Psoas muscle (tissue), 8 donors: ENCODE measurements at regions of chr10 and their contacts with region 1.

Region 1: GRCh38 chr10:110893559-110894179 is 21.9 kb downstream of the PDCD4 start:
- DNase-seq: no peak
- ATAC-seq: peak; percentile 42 to 91 (median 74)
- H3K4me3 ChIP-seq: no peak overlapping the region
- H3K27ac ChIP-seq: no peak overlapping the region
- H3K4me1 ChIP-seq: no peaks in the 10 kb centered on the region
- H3K27me3 ChIP-seq: no peaks in the 10 kb centered on the region
- CTCF ChIP-seq: peak; percentile 65

Region 2: DNA sequence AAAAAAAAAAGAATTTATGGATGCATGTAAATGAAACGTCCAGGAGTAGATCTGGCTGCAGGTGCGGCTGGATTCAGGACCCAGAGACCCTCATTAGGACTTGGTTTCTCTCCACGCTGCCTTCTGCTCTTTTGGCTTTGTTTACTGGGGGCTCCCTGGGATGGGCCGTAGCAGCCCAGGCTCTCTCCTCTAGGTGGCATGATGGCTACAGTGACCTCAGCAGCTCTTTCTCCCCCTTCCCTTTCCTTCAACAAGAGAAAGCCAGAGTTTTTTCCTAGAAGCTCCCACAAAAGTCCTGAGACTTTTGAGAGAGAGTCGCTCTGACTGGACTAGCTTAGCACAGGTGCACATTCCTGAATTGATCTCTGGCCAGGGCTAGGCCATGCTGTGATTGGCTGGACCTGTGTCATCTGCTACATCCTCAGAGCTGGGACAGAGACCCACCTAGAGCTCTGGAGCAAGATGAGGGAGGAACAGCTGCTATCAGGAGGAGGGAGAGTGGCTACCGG is 89.8 kb before region 1 on chr10:
- intact Hi-C with region 1: loop called (anchors 2 to 5 kb)
- DNase-seq: peak; percentile 27 to 65
- ATAC-seq: peak; percentile 45 to 73 (median 70)
- H3K4me3 ChIP-seq: no peak overlapping the region
- H3K27ac ChIP-seq: no peak overlapping the region
- H3K4me1 ChIP-seq: peaks cover 16% of the 10 kb centered on the region
- H3K27me3 ChIP-seq: no peaks in the 10 kb centered on the region
- CTCF ChIP-seq: peak; percentile 51

Region 3: GRCh38 chr10:111076191-111076681 is 182.6 kb after region 1 on chr10:
- intact Hi-C with region 1: no loop called
- DNase-seq: peak; percentile 49 to 74
- ATAC-seq: peak; percentile 75 to 92 (median 84)
- H3K4me3 ChIP-seq: peak overlapping the region; percentile 67
- H3K27ac ChIP-seq: no peak overlapping the region
- H3K4me1 ChIP-seq: peaks cover 16% of the 10 kb centered on the region
- H3K27me3 ChIP-seq: peaks cover 0 to 80% (median 15%) of the 10 kb centered on the region in 3 donors
- CTCF ChIP-seq: peak; percentile 89